A673 (cell line): ENCODE measurements at regions of chr6 and their contacts with region 1.

Region 1: GRCh38 chr6:116060572-116061283 is at the start of gene FRK:
- DNase-seq: peak; percentile 63
- H3K4me3 ChIP-seq: peak within 1 kb of the TSS; percentile 54
- H3K27ac ChIP-seq: peak within 1 kb of the TSS; percentile 74
- H3K4me1 ChIP-seq: peaks cover 10% of the 10 kb centered on the region
- H3K27me3 ChIP-seq: no peaks in the 10 kb centered on the region
- CTCF ChIP-seq: peak; percentile 59
- total RNA-seq, gene FRK: 10.0 and 12.3 TPM in 2 replicates

Region 2: GRCh38 chr6:114816678-114817077 is 1244.0 kb before region 1 on chr6:
- CTCF ChIA-PET with region 1: interaction called, 16 read pairs
- POLR2A ChIA-PET with region 1: no interaction called
- intact Hi-C with region 1: no loop called
- DNase-seq: no peak
- H3K4me3 ChIP-seq: no peak overlapping the region
- H3K27ac ChIP-seq: no peak overlapping the region
- H3K4me1 ChIP-seq: no peaks in the 10 kb centered on the region
- H3K27me3 ChIP-seq: no peaks in the 10 kb centered on the region
- CTCF ChIP-seq: no peak

Region 3: DNA sequence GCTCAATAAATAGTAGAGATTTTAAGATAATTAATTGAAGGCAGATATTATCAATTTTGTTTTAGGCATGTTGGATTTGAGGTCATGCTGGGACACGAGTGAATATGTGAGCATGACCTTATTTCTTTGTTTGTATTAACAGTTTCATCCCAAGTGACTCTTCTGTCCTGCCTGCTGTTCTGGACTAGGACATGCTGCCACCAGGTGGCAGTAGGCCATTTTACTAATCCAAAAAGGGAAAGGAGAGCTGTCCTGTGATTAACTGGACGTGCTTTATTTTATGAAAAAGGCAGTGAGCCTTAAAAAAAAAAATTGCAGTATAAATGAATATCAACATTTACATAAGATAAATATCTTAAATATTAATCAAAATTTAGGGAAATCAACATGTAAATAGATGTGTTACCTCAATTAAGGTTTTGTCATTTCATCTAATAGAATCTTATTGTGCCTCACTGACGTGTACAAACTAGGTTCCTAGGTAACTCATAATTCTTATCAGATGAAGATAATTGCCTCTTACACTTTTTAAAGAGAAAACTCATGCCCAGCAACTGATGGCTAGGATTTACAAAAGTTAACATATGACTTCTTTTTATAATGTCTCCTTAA is 49.8 kb before region 1 on chr6:
- CTCF ChIA-PET with region 1: interaction called, 4 read pairs
- POLR2A ChIA-PET with region 1: no interaction called
- intact Hi-C with region 1: loop called (anchors 5 kb)
- DNase-seq: peak; percentile 79
- H3K4me3 ChIP-seq: no peak overlapping the region
- H3K27ac ChIP-seq: no peak overlapping the region
- H3K4me1 ChIP-seq: peaks cover 35% of the 10 kb centered on the region
- H3K27me3 ChIP-seq: no peaks in the 10 kb centered on the region
- CTCF ChIP-seq: peak; percentile 92